MCF 10A (cell line): ENCODE measurements at regions of chr15 and their contacts with region 1.

Region 1: GRCh38 chr15:59522988-59523461 is 85.0 kb downstream of the FAM81A start:
- DNase-seq: peak; percentile 41
- H3K4me3 Mint-ChIP-seq: no peak overlapping the region
- H3K27ac Mint-ChIP-seq: no peak overlapping the region
- H3K4me1 Mint-ChIP-seq: no peaks in the 10 kb centered on the region
- H3K27me3 Mint-ChIP-seq: no peaks in the 10 kb centered on the region
- CTCF ChIP-seq: no peak

Region 2: GRCh38 chr15:59501597-59501996 is 21.4 kb before region 1 on chr15:
- CTCF ChIA-PET with region 1: interaction called, 10 read pairs
- POLR2A ChIA-PET with region 1: no interaction called
- intact Hi-C with region 1: no loop called
- DNase-seq: peak; percentile 75
- H3K4me3 Mint-ChIP-seq: no peak overlapping the region
- H3K27ac Mint-ChIP-seq: no peak overlapping the region
- H3K4me1 Mint-ChIP-seq: no peaks in the 10 kb centered on the region
- H3K27me3 Mint-ChIP-seq: no peaks in the 10 kb centered on the region
- CTCF ChIP-seq: peak; percentile 74